H1 (cell line): ENCODE measurements at regions of chr11 and their contacts with region 1.

Region 1: DNA sequence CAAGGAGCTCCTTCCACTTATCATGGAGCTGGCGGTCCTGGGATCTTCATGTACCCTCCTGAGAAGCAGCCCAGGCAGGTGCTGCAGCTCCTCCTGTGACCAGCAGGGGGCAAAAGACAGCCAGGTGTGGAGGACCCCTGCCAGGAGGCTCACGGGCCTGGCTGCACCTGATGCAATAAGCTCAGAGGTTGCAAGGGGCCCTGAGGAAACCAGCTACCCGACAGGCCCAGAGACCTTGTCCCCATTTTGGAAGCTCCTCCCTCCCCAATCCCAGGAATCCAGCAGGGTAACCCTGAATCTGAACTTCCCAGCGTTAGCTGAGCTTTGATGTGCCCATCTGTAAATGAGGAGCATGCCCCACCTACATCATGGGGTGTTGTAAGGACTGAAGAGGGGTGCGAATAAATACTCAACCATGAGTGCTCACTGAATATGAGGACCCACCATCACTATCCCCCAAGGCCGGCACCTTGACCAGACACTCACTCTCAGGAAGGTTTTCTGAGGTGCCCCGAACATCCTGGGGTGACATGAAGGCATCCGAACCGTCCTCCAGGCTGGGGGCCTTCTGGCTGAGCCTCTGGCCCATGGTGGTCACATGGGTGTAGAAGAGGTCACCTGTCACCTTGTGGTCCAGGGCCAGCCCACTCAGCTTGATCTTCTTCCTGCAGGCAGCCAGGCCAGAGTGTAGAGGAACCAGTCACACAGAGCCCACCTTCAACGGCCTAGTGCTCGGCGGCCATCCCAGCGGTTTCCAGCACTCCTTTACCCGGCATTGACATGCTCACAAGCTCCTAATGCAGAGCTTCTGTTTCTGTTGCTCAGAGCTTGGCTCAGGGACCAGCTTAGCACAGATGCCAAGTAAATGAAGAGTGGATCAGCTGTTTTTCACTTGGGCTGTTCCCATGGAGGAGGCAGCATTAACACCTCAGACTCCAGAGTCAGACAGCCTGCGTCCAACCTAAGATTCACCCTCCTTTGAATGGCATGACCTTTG is 21.7 kb downstream of the SLC43A1 start:
- DNase-seq: peak; percentile 88 to 93
- H3K4me3 ChIP-seq: no peak overlapping the region
- H3K27ac ChIP-seq: peak overlapping the region; percentile 88
- H3K4me1 ChIP-seq: peaks cover 0 to 7% (median 5%) of the 10 kb centered on the region in 4 experiments; a peak in 4 of 7 replicates
- H3K27me3 ChIP-seq: no peaks in the 10 kb centered on the region
- CTCF ChIP-seq: peak; percentile 81 to 90 (median 87)
- EP300 ChIP-seq: peak in 1 of 2 experiments; percentile 81; a peak in 1 of 3 replicates
- POLR2A ChIP-seq: peak in 1 of 2 experiments; percentile 36; a peak in 1 of 3 replicates
- RAD21 ChIP-seq: peak; percentile 63 to 74

Region 2: DNA sequence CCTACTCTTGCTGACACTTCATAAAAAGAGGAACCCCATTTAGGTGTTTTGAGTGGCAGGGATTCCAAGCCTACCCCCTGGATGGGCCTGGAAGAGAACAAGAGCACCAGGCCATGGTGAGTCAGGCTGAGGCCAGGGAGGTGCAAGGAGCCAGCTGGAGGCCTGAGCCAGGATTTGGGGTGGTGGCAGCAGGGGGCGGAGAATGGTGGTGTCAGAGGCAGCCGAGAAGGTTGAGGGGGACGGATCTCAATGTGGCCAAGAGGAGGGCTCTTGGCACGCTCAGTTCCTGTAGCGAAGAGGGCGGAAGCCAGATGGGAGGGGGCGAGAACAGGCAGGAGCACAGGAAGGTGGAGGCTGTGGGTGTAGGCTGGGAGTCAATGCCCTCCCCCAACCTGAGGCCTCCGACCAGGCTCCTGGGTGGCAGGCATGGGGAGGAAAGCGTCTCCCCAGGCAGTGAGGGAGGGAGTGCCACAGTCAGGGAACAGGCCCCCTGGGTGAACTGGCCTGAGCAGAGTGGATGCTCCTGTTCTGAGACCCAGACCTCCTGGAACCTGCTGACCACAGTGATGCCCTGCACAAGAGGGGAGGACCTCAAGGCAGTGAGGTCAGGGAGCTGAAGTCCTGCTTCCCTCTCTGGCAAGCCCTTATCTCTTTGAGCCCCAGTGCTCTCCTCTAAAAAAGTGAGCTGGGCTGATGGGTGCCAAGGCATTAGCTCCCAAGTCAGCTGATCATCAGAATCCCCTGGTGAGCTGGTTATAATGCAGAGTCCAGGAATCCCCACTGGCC is 19.6 kb before region 1 on chr11:
- CTCF ChIA-PET with region 1: interaction called, 193 read pairs
- POLR2A ChIA-PET with region 1: interaction called, 90 read pairs
- DNase-seq: no peak
- H3K4me3 ChIP-seq: no peak overlapping the region
- H3K27ac ChIP-seq: no peak overlapping the region
- H3K4me1 ChIP-seq: peaks cover 4 to 25% (median 13%) of the 10 kb centered on the region in 4 experiments
- H3K27me3 ChIP-seq: peaks cover 0 to 35% (median 22%) of the 10 kb centered on the region in 4 experiments; a peak in 6 of 7 replicates
- CTCF ChIP-seq: no peak
- EP300 ChIP-seq: no peak
- POLR2A ChIP-seq: no peak
- RAD21 ChIP-seq: no peak

Region 3: GRCh38 chr11:57515332-57516060 is 21.7 kb after region 1 on chr11 and contains the start of gene SLC43A1:
- CTCF ChIA-PET with region 1: interaction called, 1,146 read pairs
- POLR2A ChIA-PET with region 1: interaction called, 79 read pairs
- DNase-seq: peak in 1 of 2 experiments; percentile 66
- H3K4me3 ChIP-seq: peak within 1 kb of the TSS; percentile 49 to 76 (median 68)
- H3K27ac ChIP-seq: no peak within 1 kb of the TSS
- H3K4me1 ChIP-seq: peaks cover 3 to 10% (median 5%) of the 10 kb centered on the region in 4 experiments
- H3K27me3 ChIP-seq: peaks cover 0 to 21% (median 10%) of the 10 kb centered on the region in 4 experiments; a peak in 4 of 7 replicates
- CTCF ChIP-seq: no peak
- EP300 ChIP-seq: no peak
- POLR2A ChIP-seq: no peak; a peak in 1 of 3 replicates
- RAD21 ChIP-seq: 0 out of 4 replicates have a peak, but pooled peaks of 1 of the 2 experiments have one; percentile 0
- total RNA-seq, gene SLC43A1: 30.1 and 34.5 TPM in 2 replicates

Region 4: GRCh38 chr11:57546869-57547475 is 53.2 kb after region 1 on chr11:
- CTCF ChIA-PET with region 1: interaction called, 34 read pairs
- POLR2A ChIA-PET with region 1: interaction called, 3 read pairs
- DNase-seq: no peak
- H3K4me3 ChIP-seq: no peak overlapping the region
- H3K27ac ChIP-seq: no peak overlapping the region
- H3K4me1 ChIP-seq: peaks cover 0 to 15% (median 11%) of the 10 kb centered on the region in 4 experiments; a peak in 6 of 7 replicates
- H3K27me3 ChIP-seq: no peaks in the 10 kb centered on the region; a peak in 2 of 7 replicates
- CTCF ChIP-seq: peak in 2 of 3 experiments; percentile 19 to 21; a peak in 2 of 4 replicates
- EP300 ChIP-seq: no peak
- POLR2A ChIP-seq: no peak
- RAD21 ChIP-seq: peak; percentile 1 to 17; a peak in 1 of 4 replicates

Region 5: DNA sequence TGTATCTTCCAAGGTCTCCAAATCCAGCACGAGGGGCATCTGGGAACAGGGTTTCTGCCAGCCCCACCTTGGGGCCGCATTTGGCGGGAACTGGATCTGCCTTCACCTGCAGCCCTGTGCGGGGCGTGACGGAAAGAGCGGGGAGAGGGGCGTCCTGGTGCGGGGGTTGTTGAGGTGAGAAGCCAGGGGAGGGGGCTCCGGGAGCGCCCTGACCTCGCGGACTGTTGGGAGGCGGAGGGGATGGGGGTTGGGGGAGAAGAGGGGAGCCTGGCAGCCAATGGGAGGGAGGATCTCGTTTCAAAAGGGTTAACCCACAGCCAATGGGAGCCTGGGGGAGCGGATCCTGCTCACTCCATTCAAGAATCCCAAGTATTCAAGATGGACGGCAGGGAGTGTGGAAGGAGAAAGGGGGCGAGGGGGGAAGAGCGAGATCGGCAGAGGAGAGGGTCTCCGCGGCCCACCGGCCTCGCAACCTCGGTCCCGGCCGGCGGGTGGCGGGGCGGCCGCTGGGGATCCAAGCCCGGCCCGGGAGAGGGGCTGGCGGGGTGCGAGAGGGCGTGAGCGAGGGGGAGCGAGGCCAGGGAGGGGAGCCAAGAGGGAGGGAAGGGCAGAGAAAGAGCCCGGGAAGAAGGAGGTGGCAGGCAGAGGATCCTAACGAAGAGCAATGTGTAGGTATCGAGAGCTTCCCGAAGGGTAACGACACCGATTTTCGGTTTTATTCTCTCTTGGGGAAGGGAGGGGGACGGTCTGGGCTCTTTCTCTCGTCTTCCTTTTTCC is 144.4 kb after region 1 on chr11:
- CTCF ChIA-PET with region 1: interaction called, 15 read pairs
- POLR2A ChIA-PET with region 1: interaction called, 19 read pairs
- DNase-seq: peak; percentile 86 to 89
- H3K4me3 ChIP-seq: peak overlapping the region; percentile 94 to 100 (median 98)
- H3K27ac ChIP-seq: peak overlapping the region; percentile 98
- H3K4me1 ChIP-seq: peaks cover 11 to 31% (median 22%) of the 10 kb centered on the region in 4 experiments
- H3K27me3 ChIP-seq: no peaks in the 10 kb centered on the region; a peak in 1 of 7 replicates
- CTCF ChIP-seq: no peak
- EP300 ChIP-seq: peak in 1 of 2 experiments; percentile 64; a peak in 1 of 3 replicates
- POLR2A ChIP-seq: peak; percentile 94 to 95
- RAD21 ChIP-seq: no peak